H1 (cell line): ENCODE measurements at regions of chr2 and their contacts with region 1.

Region 1: DNA sequence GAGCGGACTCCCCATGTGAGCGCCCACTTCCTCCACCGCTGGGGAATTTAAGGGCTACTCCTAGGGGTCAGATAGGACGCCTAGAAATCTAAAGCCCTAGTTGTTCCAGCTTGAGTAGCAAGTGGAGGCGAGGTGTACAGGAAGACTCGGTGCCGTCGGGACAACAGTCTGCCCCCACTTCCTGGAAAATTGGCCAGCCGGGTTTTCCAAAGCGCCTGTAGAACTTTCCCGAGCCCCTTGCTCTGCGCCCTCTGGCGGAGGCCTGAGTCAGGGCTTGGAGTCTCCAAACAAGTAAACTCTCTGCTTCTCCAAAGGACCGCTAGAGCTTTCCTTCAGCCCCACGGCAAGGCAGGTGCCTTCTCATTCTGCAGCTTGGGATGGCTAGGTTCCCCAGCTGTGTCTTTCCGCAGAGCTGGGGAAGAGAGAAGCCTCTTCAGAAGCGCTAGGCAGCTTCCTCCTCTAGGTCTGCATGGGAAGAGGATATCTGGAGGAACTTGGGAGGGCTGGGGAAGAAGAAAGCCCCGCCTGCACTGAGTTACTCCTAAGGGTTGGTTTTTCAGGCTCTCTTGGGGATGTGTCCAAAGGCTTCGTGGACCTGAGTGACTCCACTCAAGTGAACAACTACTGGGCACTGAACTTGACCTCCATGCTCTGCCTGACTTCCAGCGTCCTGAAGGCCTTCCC is 688 bp downstream of the SPR start:
- DNase-seq: peak; percentile 81 to 96
- H3K4me3 ChIP-seq: peak overlapping the region; percentile 47 to 68 (median 65)
- H3K27ac ChIP-seq: no peak overlapping the region
- H3K4me1 ChIP-seq: peaks cover 0 to 8% (median 1%) of the 10 kb centered on the region in 4 experiments; a peak in 5 of 7 replicates
- H3K27me3 ChIP-seq: peaks cover 4 to 36% (median 24%) of the 10 kb centered on the region in 4 experiments
- CTCF ChIP-seq: peak; percentile 79 to 98 (median 97)
- EP300 ChIP-seq: no peak; a peak in 1 of 3 replicates
- POLR2A ChIP-seq: no peak
- RAD21 ChIP-seq: peak; percentile 41 to 65

Region 2: DNA sequence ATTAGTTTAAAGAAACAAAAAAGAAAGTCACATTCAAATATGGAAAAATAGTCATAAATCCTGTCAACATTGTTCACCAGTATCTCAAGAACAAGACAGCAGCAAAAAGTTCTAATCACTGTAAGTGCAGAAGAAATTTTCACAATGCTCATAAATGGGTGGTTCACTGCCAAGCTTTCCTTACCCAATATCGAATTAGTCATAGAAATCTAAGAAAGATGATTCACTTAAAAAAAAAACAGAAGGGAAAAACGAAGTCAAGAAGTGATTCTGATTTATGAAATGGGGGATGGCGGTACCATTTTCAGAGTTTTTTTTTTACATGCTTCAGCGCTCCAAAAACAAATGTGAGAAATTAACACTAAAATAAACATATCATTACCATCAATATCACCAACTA is 218.8 kb before region 1 on chr2:
- CTCF ChIA-PET with region 1: no interaction called
- POLR2A ChIA-PET with region 1: no interaction called
- DNase-seq: no peak
- H3K4me3 ChIP-seq: no peak overlapping the region
- H3K27ac ChIP-seq: no peak overlapping the region
- H3K4me1 ChIP-seq: no peaks in the 10 kb centered on the region
- H3K27me3 ChIP-seq: no peaks in the 10 kb centered on the region
- CTCF ChIP-seq: no peak
- EP300 ChIP-seq: no peak
- POLR2A ChIP-seq: no peak
- RAD21 ChIP-seq: no peak

Region 3: DNA sequence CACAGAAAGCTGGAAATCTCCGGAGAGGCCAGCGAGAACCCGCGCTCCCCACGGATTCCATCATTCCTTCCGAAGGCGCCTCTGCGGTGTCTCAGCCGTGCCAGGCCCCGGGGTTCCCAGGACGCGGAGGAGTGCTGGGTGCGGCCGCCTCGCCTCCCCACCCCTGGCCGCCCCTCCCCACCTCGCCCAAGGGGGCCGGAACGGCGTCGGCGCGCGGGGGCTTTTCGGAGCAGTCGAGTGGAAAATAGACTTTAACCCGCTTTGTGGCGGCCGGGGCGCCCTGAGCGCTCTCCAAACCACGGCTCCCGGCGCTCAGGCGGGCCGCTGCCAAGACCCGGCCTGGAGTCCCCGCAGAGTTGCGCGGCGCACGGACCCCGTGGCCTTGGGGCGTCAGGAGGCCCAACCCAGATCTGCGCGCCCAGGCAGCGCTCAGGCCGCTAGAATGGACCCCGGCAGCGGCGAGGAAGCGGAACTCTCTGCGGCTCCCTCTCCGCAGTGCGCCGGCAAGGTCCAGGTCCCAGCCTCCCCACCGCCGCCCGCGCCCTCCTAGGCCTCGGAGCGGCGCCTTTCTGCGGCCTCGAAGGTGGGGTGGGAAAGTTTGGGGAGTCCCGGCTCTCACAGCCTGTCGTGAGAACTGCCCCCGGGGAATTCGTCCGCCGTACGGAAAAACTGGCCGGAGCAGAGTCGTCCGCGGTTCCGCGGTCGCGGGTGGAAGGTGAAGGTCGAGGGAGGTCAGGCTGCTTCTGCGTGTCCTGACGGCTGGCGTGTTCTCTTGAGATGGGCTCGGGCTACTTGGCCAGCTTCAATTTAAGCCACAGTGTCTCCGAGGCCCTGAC is 28.2 kb after region 1 on chr2:
- CTCF ChIA-PET with region 1: interaction called, 497 read pairs
- POLR2A ChIA-PET with region 1: interaction called, 7 read pairs
- DNase-seq: peak in 1 of 2 experiments; percentile 86
- H3K4me3 ChIP-seq: peak overlapping the region; percentile 55 to 70 (median 66)
- H3K27ac ChIP-seq: no peak overlapping the region
- H3K4me1 ChIP-seq: peaks cover 20 to 52% (median 28%) of the 10 kb centered on the region in 4 experiments
- H3K27me3 ChIP-seq: peaks cover 80 to 96% (median 89%) of the 10 kb centered on the region in 4 experiments
- CTCF ChIP-seq: no peak
- EP300 ChIP-seq: no peak
- POLR2A ChIP-seq: no peak
- RAD21 ChIP-seq: no peak

Region 4: GRCh38 chr2:72973566-72974435 is 85.9 kb after region 1 on chr2:
- CTCF ChIA-PET with region 1: interaction called, 166 read pairs
- POLR2A ChIA-PET with region 1: interaction called, 3 read pairs
- DNase-seq: peak in 1 of 2 experiments; percentile 85
- H3K4me3 ChIP-seq: no peak overlapping the region
- H3K27ac ChIP-seq: no peak overlapping the region
- H3K4me1 ChIP-seq: peaks cover 5 to 21% (median 17%) of the 10 kb centered on the region in 4 experiments
- H3K27me3 ChIP-seq: no peaks in the 10 kb centered on the region; a peak in 1 of 7 replicates
- CTCF ChIP-seq: peak; percentile 93 to 95 (median 94)
- EP300 ChIP-seq: no peak
- POLR2A ChIP-seq: no peak
- RAD21 ChIP-seq: peak; percentile 86 to 89

Region 5: GRCh38 chr2:73004889-73005596 is 117.1 kb after region 1 on chr2:
- CTCF ChIA-PET with region 1: interaction called, 21 read pairs
- POLR2A ChIA-PET with region 1: no interaction called
- DNase-seq: peak in 1 of 2 experiments; percentile 40
- H3K4me3 ChIP-seq: no peak overlapping the region
- H3K27ac ChIP-seq: no peak overlapping the region
- H3K4me1 ChIP-seq: no peaks in the 10 kb centered on the region
- H3K27me3 ChIP-seq: no peaks in the 10 kb centered on the region
- CTCF ChIP-seq: no peak
- EP300 ChIP-seq: no peak
- POLR2A ChIP-seq: no peak
- RAD21 ChIP-seq: no peak

Region 6: GRCh38 chr2:73156539-73157124 is 268.7 kb after region 1 on chr2:
- CTCF ChIA-PET with region 1: interaction called, 19 read pairs
- POLR2A ChIA-PET with region 1: no interaction called
- DNase-seq: peak; percentile 77 to 89
- H3K4me3 ChIP-seq: peak overlapping the region; percentile 20 to 54 (median 38); a peak in 6 of 8 replicates
- H3K27ac ChIP-seq: no peak overlapping the region
- H3K4me1 ChIP-seq: peaks cover 0 to 3% (median 0%) of the 10 kb centered on the region in 4 experiments; a peak in 2 of 7 replicates
- H3K27me3 ChIP-seq: peaks cover 0 to 7% (median 2%) of the 10 kb centered on the region in 4 experiments; a peak in 4 of 7 replicates
- CTCF ChIP-seq: peak; percentile 95 to 99 (median 95)
- EP300 ChIP-seq: peak in 1 of 2 experiments; percentile 31; a peak in 1 of 3 replicates
- POLR2A ChIP-seq: no peak
- RAD21 ChIP-seq: peak; percentile 95 to 98